ENCODE measurements at regions of chr5 and their contacts with region 1.

Region 1: DNA sequence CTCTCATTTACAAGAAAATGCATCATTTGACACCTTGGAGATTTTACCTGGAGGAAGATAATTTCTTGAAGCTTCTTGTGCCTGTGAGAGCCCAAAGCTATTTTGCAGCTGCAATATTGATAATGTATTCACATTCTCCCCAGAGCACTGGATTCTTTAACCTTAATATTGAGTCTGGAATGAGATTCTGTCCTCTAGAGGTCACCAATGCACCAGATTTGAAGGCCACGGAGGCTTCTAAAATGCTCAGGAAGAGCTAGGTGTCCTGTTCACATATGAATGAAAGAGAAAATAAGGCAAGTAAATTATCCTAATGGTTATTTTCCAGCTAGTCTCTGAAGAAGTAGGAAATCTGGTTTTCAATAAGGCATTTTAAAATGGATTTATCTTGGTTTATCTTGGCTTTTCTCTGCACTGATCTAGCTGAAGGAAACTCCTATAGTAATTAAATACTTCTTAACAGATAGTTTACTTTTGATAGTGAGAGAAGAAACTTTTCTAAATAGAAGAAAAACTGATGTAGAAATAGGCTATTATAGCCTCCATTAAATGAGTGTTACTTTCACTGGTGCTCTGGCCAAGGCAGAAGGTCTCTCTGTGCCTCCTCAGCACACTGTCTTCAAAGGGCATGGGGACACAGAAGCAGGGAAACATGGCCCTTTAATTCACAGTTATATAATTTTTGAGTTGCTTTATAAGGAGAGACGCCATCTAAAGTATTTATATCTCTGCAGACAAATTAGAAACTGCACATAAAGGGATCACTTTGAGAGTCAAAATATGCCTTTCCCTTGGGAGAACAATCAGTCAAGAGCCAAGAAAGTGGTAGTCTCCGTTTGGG is 297.0 kb upstream of the ACTBL2 start:
- DNase-seq: peak; percentile 16
- H3K4me3 ChIP-seq: peak overlapping the region; percentile 9
- H3K27ac ChIP-seq: peak overlapping the region; percentile 63
- H3K4me1 ChIP-seq: peaks cover 44% of the 10 kb centered on the region
- H3K27me3 ChIP-seq: no peaks in the 10 kb centered on the region
- CTCF ChIP-seq: peak; percentile 76

Region 2: DNA sequence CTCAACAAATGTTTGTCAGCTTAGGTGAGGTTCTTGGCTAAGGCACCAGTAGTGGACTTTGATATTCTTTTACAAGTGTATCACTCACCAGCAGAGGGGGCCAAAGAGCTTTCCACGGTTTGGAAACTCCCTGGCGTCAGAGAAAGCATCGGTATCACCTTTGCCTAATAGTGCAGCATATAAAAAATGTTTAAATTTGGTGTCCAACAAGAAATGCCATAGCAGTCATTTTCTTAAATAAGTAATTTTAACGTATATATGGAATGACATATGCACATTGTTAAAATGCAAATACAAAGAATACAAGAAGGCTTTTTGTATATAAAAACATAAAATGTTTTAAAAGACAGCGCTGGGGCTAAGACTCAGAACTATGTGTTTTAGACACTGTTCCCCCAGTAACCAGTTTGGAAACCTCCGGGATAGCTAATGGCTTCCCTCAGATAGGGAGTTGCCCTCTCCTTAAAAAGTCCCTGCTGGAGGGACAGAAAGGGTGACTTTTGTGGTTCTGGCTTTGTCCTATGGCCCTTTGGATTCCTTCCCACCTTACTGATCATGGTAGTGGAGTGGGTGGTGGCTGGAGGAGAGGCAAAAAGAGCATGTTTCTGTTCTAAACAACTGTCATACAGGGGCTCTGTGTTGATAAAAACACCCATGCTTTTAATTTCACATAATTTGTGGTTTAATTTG is 481.2 kb before region 1 on chr5:
- intact Hi-C with region 1: loop called (anchors 10 kb)
- DNase-seq: peak; percentile 65
- H3K4me3 ChIP-seq: peak overlapping the region; percentile 49
- H3K27ac ChIP-seq: peak overlapping the region; percentile 50
- H3K4me1 ChIP-seq: peaks cover 11% of the 10 kb centered on the region
- H3K27me3 ChIP-seq: no peaks in the 10 kb centered on the region
- CTCF ChIP-seq: peak; percentile 89

Region 3: DNA sequence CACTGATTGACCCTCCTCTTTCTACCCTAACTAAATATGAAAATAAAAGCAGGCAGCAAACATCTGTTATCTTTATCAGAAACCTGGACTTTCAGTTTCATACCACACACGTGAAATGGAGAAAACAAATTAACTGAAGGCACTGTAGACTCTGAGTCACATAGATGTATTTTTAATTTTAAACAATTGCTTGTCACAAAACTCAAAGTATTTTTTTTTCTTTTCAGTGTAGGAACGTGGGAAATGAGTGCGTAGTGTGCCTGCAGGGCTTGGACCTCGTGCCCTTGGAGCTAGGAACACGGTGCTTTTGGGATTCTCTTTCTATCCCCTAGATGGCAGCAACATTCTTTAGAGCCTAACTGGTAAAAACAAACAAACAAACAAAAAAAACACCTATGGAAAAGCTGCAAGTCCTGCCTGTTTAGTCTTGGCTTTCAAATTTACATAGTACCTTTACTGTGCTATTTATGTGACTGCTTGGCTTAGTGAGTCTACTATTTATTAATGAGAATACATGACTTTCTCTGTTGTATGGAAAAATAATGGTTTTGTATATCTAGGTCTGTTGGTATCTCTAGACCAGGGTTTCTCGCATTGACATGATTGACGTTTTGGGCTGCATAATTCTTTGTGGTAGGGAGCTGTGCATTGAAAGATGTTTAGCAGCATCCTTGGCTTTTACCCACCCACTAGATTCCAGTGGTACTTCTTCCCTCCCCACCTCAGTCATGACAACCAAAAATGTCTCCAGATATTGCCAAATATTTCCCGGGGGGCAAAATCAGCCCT is 280.1 kb before region 1 on chr5:
- intact Hi-C with region 1: loop called (anchors 10 kb)
- DNase-seq: no peak
- H3K4me3 ChIP-seq: peak overlapping the region; percentile 48
- H3K27ac ChIP-seq: peak overlapping the region; percentile 30
- H3K4me1 ChIP-seq: peaks cover 44% of the 10 kb centered on the region
- H3K27me3 ChIP-seq: no peaks in the 10 kb centered on the region
- CTCF ChIP-seq: peak; percentile 82

Region 4: DNA sequence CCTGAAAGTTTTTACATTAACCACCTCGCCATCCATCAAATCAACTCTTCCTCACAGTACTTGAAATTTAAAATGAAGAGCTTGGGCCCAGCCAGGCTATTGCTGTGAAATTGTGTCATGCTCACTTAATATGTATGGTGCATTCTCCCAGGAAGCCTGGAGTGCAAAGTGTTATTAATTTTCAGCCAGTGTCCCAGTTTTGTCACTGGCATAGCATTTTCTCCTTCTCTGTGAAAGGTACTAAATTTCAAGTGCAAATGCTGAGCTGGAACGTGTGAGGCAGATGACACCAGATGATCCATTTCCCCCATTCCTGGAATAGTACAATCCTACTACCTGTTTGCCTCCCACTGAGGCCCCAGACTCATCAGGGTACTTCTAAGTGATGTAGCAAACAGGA is 100.6 kb after region 1 on chr5:
- intact Hi-C with region 1: loop called (anchors 5 kb)
- DNase-seq: no peak
- H3K4me3 ChIP-seq: no peak overlapping the region
- H3K27ac ChIP-seq: no peak overlapping the region
- H3K4me1 ChIP-seq: no peaks in the 10 kb centered on the region
- H3K27me3 ChIP-seq: no peaks in the 10 kb centered on the region
- CTCF ChIP-seq: no peak

Region 5: GRCh38 chr5:58060996-58061395 is 281.4 kb after region 1 on chr5:
- intact Hi-C with region 1: no loop called
- DNase-seq: no peak
- H3K4me3 ChIP-seq: no peak overlapping the region
- H3K27ac ChIP-seq: peak overlapping the region; percentile 28
- H3K4me1 ChIP-seq: peaks cover 13% of the 10 kb centered on the region
- H3K27me3 ChIP-seq: no peaks in the 10 kb centered on the region
- CTCF ChIP-seq: no peak

Region 6: GRCh38 chr5:58346014-58346413 is 566.4 kb after region 1 on chr5:
- intact Hi-C with region 1: no loop called
- DNase-seq: no peak
- H3K4me3 ChIP-seq: no peak overlapping the region
- H3K27ac ChIP-seq: no peak overlapping the region
- H3K4me1 ChIP-seq: no peaks in the 10 kb centered on the region
- H3K27me3 ChIP-seq: no peaks in the 10 kb centered on the region
- CTCF ChIP-seq: no peak